ENCODE measurements at regions of chr7 and their contacts with region 1.

Region 1: DNA sequence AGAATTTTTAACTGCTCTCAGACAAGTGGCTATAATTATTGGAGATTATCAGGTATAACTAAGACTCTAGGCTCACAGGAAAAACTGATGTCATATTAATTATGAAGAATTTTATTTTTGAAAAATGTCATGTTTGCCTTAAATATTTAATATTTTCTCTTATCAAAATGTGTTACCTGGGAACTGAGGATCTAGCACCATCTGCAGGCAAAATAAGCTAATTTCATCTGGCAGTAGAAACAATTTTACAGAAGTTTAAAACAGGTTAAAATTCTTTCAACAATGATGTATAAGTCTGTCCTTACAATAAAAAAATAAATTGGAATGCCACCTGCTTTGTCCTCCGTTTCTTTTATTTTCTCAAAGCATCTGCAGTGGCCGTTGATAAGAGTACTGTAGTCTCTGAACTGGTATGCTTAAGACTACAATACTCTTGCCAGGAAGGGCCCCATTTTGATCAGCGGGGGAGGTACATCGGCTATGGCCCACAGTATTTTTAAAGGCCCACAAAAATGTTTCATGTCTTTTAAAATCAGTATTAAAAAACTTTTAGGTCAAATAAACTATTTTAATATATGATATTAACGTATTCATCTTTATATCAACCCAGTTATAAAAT is 81.3 kb downstream of the VWDE start:
- DNase-seq: peak in 7 of 9 donors; percentile 5 to 53 (median 47)
- ATAC-seq: no peak
- H3K4me3 ChIP-seq: no peak overlapping the region
- H3K4me3 Mint-ChIP-seq: no peak overlapping the region
- H3K27ac ChIP-seq: no peak overlapping the region
- H3K27ac Mint-ChIP-seq: no peak overlapping the region
- H3K4me1 ChIP-seq: no peaks in the 10 kb centered on the region
- H3K4me1 Mint-ChIP-seq: peaks cover 0 to 4% (median 0%) of the 10 kb centered on the region in 7 donors
- H3K27me3 ChIP-seq: no peaks in the 10 kb centered on the region
- H3K27me3 Mint-ChIP-seq: peaks cover 0 to 4% (median 0%) of the 10 kb centered on the region in 5 donors

Region 2: GRCh38 chr7:11373546-11374142 is 948.7 kb before region 1 on chr7:
- CTCF ChIA-PET with region 1: interaction called, 3 read pairs
- POLR2A ChIA-PET with region 1: no interaction called
- intact Hi-C with region 1: loop called in 1 of 2 experiments (anchors 5 kb)
- DNase-seq: no peak
- ATAC-seq: no peak
- H3K4me3 ChIP-seq: no peak overlapping the region
- H3K4me3 Mint-ChIP-seq: no peak overlapping the region
- H3K27ac ChIP-seq: no peak overlapping the region
- H3K27ac Mint-ChIP-seq: no peak overlapping the region
- H3K4me1 ChIP-seq: no peaks in the 10 kb centered on the region
- H3K4me1 Mint-ChIP-seq: no peaks in the 10 kb centered on the region
- H3K27me3 ChIP-seq: no peaks in the 10 kb centered on the region
- H3K27me3 Mint-ChIP-seq: peaks cover 0 to 6% (median 0%) of the 10 kb centered on the region in 5 donors

Region 3: GRCh38 chr7:11831736-11832495 is 490.5 kb before region 1 on chr7 and contains the start of gene THSD7A:
- CTCF ChIA-PET with region 1: no interaction called
- POLR2A ChIA-PET with region 1: no interaction called
- intact Hi-C with region 1: loop called in 1 of 2 experiments (anchors 5 kb)
- DNase-seq: peak in 2 of 9 donors; percentile 2 to 26
- ATAC-seq: peak; percentile 70
- H3K4me3 ChIP-seq: no peak within 1 kb of the TSS
- H3K4me3 Mint-ChIP-seq: peak within 1 kb of the TSS in 8 of 10 donors; percentile 20 to 47 (median 34)
- H3K27ac ChIP-seq: no peak within 1 kb of the TSS
- H3K27ac Mint-ChIP-seq: no peak within 1 kb of the TSS
- H3K4me1 ChIP-seq: no peaks in the 10 kb centered on the region
- H3K4me1 Mint-ChIP-seq: peaks cover 0 to 14% (median 9%) of the 10 kb centered on the region in 7 donors
- H3K27me3 ChIP-seq: peaks cover 0 to 4% of the 10 kb centered on the region in 2 donors
- H3K27me3 Mint-ChIP-seq: peaks cover 31 to 55% (median 36%) of the 10 kb centered on the region in 5 donors
- total RNA-seq, gene THSD7A: 1.2 to 1.3 TPM in 2 of 5 experiments, not detected in the others

Region 4: DNA sequence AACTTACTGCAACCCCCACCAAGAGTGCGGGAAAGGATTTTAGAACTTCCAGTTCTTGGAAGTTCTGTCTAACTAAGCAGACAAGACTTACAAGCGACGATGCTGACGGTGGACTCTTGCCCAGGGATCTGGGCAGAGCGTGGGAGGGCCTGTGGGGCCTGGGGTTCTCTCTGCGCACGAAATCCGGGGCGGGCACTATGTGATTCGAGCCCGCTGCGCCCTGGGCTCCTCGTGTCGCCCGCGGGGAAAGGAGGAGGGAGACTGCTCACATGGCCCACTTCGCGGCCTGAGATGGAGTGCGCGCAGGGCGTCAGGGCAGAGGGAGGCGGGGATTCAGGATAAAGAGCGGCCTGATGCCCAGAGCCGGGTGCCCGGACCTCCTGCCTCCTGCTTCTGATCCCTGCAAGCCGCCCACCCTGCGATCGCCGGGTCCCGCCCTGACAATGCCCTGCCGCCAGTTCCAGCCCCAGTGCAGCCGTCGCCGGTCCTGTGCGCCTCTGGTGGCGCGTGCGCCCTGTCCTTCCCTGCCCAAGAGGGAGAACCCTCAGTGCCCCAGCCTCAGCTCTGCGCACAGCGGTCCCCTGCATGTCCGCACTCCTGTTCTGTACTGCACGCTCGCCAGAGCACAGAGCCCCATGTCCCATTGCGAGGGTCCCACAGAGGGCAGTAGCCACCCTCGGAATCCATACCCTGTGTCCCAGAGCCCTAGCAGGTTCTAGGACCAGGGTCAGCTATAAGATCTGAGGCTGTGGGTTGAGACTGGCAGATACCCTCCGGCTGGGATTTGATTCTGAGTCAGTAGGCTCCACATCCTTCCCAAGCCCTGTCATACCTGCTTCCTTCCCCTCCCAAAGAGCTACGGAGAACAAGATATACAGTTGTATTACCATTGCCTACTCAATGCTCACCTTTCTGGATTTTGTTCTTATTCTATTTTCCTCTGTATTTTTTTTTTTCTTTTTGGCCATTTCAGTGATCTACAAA is 210.7 kb before region 1 on chr7:
- CTCF ChIA-PET with region 1: no interaction called
- POLR2A ChIA-PET with region 1: no interaction called
- intact Hi-C with region 1: loop called in 1 of 2 experiments (anchors 1 kb)
- DNase-seq: peak in 6 of 9 donors; percentile 2 to 20 (median 8)
- ATAC-seq: peak; percentile 68
- H3K4me3 ChIP-seq: peak overlapping the region; percentile 20
- H3K4me3 Mint-ChIP-seq: peak overlapping the region; percentile 3 to 87 (median 77)
- H3K27ac ChIP-seq: no peak overlapping the region
- H3K27ac Mint-ChIP-seq: peak overlapping the region in 2 of 9 donors; percentile 3 to 49
- H3K4me1 ChIP-seq: no peaks in the 10 kb centered on the region
- H3K4me1 Mint-ChIP-seq: peaks cover 0 to 20% (median 13%) of the 10 kb centered on the region in 7 donors
- H3K27me3 ChIP-seq: no peaks in the 10 kb centered on the region
- H3K27me3 Mint-ChIP-seq: peaks cover 32 to 59% (median 34%) of the 10 kb centered on the region in 5 donors

Region 5: DNA sequence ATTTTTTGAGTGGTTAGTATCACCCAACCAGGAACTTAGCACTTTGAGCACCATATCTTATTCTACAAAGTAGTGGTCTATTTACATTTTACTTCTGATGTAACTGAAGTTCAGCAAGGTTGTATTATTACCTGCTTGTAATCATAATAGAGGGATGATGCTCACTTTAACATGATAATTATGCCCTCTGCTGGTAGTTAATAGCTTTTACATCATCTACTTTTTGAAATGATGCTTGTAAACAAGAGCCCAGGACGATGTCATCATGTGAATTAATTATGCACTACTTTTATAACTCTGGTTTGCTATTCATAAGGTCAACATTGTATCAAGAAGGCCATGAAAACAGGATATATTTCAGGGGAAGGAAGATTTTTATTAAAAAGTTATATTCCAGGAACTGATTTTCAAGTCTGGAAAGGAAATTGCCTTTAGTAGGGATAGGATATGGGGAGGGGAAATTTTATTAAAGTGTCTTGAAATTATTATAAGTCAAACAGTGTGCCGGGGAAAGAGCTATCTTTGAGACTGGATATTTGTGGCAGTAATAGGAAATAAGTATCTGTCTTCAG is 167.8 kb after region 1 on chr7:
- CTCF ChIA-PET with region 1: no interaction called
- POLR2A ChIA-PET with region 1: no interaction called
- intact Hi-C with region 1: loop called in 1 of 2 experiments (anchors 5 kb)
- DNase-seq: peak in 3 of 9 donors; percentile 9 to 30 (median 19)
- ATAC-seq: peak; percentile 68
- H3K4me3 ChIP-seq: no peak overlapping the region
- H3K4me3 Mint-ChIP-seq: no peak overlapping the region
- H3K27ac ChIP-seq: no peak overlapping the region
- H3K27ac Mint-ChIP-seq: no peak overlapping the region
- H3K4me1 ChIP-seq: no peaks in the 10 kb centered on the region
- H3K4me1 Mint-ChIP-seq: no peaks in the 10 kb centered on the region
- H3K27me3 ChIP-seq: no peaks in the 10 kb centered on the region
- H3K27me3 Mint-ChIP-seq: peaks cover 4 to 14% (median 8%) of the 10 kb centered on the region in 5 donors